Activated B cell treated with CpG ODN at 0.5 μM for 24 hours (primary cell): ENCODE measurements at regions of chr20 and their contacts with region 1.

Region 1: DNA sequence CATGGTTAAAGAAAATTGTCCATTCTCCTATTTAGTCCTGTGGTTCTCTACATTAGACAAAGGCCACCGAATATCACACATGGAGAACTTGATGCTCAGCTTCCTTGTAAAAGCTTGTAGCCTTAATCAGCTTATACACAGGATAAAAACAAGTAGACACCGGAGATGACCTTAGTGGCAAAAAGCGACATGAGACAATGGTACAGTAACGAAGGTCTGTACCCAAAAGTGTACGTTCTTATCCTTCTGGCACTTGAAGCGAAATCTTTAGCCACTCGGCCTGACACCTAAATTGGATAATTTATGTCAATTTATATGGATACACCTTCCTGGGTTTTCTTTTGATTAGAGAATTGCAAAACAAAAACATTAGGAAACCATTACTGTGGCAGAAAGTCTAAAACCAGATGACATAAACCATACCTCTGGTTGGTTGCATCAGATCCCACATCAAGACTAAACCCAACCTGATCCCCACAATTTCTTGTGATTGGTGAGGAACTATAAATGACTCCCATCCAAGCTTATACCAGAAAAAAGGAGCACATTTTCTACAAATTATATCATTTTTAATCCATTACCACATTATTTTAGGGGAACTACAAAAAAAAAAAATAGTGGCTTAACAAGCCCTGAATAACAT is 6.1 kb downstream of the RBM39 start:
- DNase-seq: no peak
- ATAC-seq: no peak
- H3K4me3 Mint-ChIP-seq: no peak overlapping the region
- H3K27ac Mint-ChIP-seq: no peak overlapping the region
- H3K4me1 Mint-ChIP-seq: peaks cover 55% of the 10 kb centered on the region
- H3K27me3 Mint-ChIP-seq: no peaks in the 10 kb centered on the region
- CTCF ChIP-seq: no peak

Region 2: GRCh38 chr20:35711588-35712209 is 24.2 kb before region 1 on chr20:
- CTCF ChIA-PET with region 1: no interaction called
- POLR2A ChIA-PET with region 1: interaction called, 6 read pairs
- intact Hi-C with region 1: loop called (anchors 2 kb)
- DNase-seq: no peak
- ATAC-seq: no peak
- H3K4me3 Mint-ChIP-seq: no peak overlapping the region
- H3K27ac Mint-ChIP-seq: no peak overlapping the region
- H3K4me1 Mint-ChIP-seq: peaks cover 33% of the 10 kb centered on the region
- H3K27me3 Mint-ChIP-seq: no peaks in the 10 kb centered on the region
- CTCF ChIP-seq: no peak

Region 3: DNA sequence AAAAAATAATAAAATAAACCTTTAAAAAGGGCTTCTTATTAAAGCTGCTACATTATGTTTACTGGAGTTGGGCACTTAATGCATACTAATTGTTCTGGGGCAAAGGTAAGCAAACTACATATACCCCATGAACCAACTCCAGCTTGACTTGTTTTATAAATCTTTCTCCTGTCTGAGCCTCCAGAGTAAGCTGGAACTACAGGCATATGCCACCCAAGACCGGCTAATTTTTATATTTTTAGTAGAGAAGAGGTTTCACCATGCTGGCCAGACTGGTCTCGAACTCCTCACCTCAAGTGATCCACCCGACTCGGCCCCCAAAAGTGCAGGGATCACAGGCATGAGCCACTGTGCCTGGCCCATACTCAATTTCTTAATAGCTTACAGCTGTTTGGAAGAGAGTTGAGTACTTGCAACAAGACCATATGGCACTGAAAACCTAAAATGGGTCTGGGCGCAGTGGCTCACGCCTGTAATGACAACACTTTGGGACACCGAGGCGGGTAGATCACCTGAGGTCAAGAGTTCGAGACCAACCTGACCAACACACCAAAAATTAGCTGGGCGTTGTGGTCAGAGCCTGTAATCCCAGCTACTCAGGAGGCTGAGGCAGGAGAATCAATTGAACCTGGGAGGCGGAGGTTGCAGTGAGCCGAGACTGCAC is 16.8 kb before region 1 on chr20:
- CTCF ChIA-PET with region 1: no interaction called
- POLR2A ChIA-PET with region 1: interaction called, 6 read pairs
- intact Hi-C with region 1: loop called (anchors 2 kb)
- DNase-seq: no peak
- ATAC-seq: no peak
- H3K4me3 Mint-ChIP-seq: no peak overlapping the region
- H3K27ac Mint-ChIP-seq: no peak overlapping the region
- H3K4me1 Mint-ChIP-seq: peaks cover 9% of the 10 kb centered on the region
- H3K27me3 Mint-ChIP-seq: no peaks in the 10 kb centered on the region
- CTCF ChIP-seq: no peak

Region 4: GRCh38 chr20:35756404-35756803 is 20.5 kb after region 1 on chr20:
- CTCF ChIA-PET with region 1: no interaction called
- POLR2A ChIA-PET with region 1: no interaction called
- intact Hi-C with region 1: no loop called
- DNase-seq: no peak
- ATAC-seq: no peak
- H3K4me3 Mint-ChIP-seq: no peak overlapping the region
- H3K27ac Mint-ChIP-seq: no peak overlapping the region
- H3K4me1 Mint-ChIP-seq: no peaks in the 10 kb centered on the region
- H3K27me3 Mint-ChIP-seq: no peaks in the 10 kb centered on the region
- CTCF ChIP-seq: no peak